ENCODE measurements at regions of chr3 and their contacts with region 1.

Region 1: DNA sequence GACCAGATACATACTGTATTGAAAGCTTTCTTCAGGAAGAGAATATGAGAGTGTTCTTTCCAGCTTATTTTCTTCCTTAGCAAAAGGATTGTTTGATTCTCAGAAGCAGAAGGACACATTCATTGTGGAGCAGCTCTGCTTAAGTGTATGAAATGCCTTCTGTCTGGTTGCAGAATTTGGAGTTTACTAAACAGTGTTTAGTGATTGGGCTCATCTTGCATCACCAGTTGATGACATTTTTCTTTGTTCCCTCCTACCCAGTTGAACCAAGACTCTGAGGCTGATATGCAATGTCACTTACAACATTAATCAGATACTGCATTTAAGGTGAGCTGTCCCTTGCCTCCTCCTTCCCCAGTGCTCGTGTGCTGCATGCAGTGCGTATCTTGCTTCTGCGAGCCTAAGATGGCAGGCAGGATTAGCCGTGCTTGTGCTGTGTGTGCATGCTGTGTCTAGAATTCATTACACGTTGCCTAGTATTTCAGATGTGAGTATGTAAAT is 18.4 kb downstream of the ZBTB38 start:
- DNase-seq: no peak
- H3K4me3 ChIP-seq: peak overlapping the region; percentile 68
- H3K27ac ChIP-seq: peak overlapping the region; percentile 83
- H3K27me3 ChIP-seq: no peaks in the 10 kb centered on the region
- CTCF ChIP-seq: no peak

Region 2: DNA sequence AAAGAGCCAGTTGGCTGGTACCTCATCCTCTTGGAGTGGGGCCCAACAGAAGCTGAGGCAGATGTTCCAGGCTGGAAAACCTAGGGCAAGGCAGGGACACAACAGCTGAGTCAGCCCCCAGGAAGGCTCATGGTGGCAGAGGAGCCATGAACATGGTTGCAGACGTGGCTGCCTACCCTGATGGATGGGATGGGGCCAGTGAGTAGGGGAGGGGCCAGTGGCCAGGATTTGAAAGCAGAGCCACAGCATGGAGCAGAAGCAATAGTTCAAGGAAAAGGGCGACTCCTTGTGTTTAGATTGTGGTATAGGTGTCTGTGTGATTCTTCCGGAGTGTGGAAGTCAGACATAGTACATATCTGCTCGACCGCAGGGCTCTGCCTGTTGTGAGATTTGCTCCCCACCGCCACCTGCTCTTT is 130.8 kb before region 1 on chr3:
- CTCF ChIA-PET with region 1: no interaction called
- POLR2A ChIA-PET with region 1: no interaction called
- DNase-seq: no peak
- H3K4me3 ChIP-seq: no peak overlapping the region
- H3K27ac ChIP-seq: no peak overlapping the region
- H3K27me3 ChIP-seq: no peaks in the 10 kb centered on the region
- CTCF ChIP-seq: peak; percentile 16; the same call in 1 of the 2 replicates

Region 3: GRCh38 chr3:141303481-141304223 is 83.0 kb before region 1 on chr3:
- CTCF ChIA-PET with region 1: interaction called, 12 read pairs
- POLR2A ChIA-PET with region 1: interaction called, 3 read pairs
- DNase-seq: peak; percentile 73
- H3K4me3 ChIP-seq: no peak overlapping the region
- H3K27ac ChIP-seq: no peak overlapping the region
- H3K27me3 ChIP-seq: no peaks in the 10 kb centered on the region
- CTCF ChIP-seq: peak; percentile 72

Region 4: DNA sequence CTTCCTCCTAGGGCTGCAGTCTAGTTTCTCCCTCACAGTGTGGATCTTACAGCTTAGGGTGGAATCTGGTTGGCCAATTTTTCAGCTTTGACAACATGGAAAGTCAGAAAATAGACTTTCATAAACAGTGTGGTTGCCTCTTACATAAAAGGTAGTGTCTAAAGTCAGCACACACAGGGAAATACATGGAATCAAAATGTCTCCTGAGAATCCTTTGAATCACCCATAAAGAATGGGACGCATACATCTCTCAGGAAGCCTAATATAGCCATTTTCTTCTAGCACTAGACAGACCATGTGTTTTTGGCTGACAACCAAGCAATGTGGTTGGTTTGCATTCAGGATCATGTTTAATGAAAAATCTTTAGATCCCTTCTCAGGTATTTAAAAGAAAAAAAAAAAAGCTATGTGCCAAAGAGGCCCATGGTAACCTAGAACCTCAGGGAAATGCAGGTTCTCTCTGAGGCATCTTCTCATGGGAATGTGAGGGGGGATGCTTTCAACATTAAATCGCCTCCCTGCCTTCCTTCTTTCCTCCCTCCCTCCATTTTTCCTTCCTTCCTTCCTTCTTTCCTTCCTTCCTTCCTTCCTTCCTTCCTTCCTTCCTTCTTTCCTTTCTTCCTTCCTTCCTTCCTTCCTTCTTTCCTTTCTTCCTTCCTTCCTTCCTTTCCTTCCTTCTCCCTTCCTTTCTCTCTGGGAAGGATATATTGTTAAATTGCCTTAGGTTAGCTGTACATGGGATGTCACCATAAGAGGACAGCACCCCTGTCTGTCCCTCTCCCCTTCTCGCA is 52.6 kb before region 1 on chr3:
- CTCF ChIA-PET with region 1: no interaction called
- POLR2A ChIA-PET with region 1: interaction called, 12 read pairs
- DNase-seq: no peak
- H3K4me3 ChIP-seq: no peak overlapping the region
- H3K27ac ChIP-seq: peak overlapping the region; percentile 87
- H3K27me3 ChIP-seq: no peaks in the 10 kb centered on the region
- CTCF ChIP-seq: no peak

Region 5: GRCh38 chr3:141402476-141403171 is 16.0 kb after region 1 on chr3:
- CTCF ChIA-PET with region 1: interaction called, 4 read pairs
- POLR2A ChIA-PET with region 1: interaction called, 38 read pairs
- DNase-seq: no peak
- H3K4me3 ChIP-seq: peak overlapping the region; percentile 64
- H3K27ac ChIP-seq: peak overlapping the region; percentile 85
- H3K27me3 ChIP-seq: no peaks in the 10 kb centered on the region
- CTCF ChIP-seq: 0 out of 2 replicates have a peak, but pooled peaks have one; percentile 14

Region 6: DNA sequence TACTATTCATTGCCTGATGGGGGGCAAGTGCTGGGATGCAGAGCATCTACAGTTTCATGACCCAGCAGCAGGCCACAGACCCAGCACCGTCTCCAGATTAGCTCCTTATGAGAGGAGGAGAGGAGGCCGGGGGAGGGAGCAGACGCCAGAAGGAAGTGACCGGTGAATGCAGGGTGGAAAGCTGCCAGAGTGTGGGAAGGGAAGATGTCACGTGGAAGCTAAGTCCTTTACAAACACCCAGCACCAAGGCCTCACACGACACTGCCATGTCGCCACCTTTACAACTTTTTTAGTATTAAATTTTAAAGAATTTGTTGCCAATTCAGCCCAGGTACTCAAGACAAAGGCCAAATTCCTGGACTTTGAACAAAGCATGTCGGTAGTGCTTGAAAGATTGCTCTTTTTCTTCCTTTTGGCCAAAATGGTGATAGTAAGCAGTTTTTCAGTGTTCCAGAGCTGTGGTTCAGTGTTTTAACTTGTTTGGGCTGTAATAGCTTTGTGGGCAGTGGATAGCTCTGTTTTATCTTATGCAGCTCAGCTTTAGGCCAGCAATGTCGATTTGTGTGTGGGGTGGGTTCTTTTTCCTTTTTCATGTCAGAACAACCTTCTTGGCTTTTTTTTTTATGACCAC is 39.9 kb after region 1 on chr3:
- CTCF ChIA-PET with region 1: interaction called, 3 read pairs
- POLR2A ChIA-PET with region 1: interaction called, 10 read pairs
- DNase-seq: no peak
- H3K4me3 ChIP-seq: no peak overlapping the region
- H3K27ac ChIP-seq: peak overlapping the region; percentile 48
- H3K27me3 ChIP-seq: no peaks in the 10 kb centered on the region
- CTCF ChIP-seq: no peak

Measured in AG04450 (cell line).